ENCODE measurements at regions of chr18 and their contacts with region 1.

Region 1: GRCh38 chr18:63848159-63848558 is 39.3 kb upstream of the SERPINB2 start:
- DNase-seq: peak; percentile 52
- H3K4me3 ChIP-seq: no peak overlapping the region
- H3K27ac ChIP-seq: no peak overlapping the region
- H3K4me1 ChIP-seq: peaks cover 10% of the 10 kb centered on the region
- H3K27me3 ChIP-seq: no peaks in the 10 kb centered on the region
- CTCF ChIP-seq: peak; percentile 71 to 74

Region 2: GRCh38 chr18:63025251-63026090 is 822.7 kb before region 1 on chr18:
- CTCF ChIA-PET with region 1: no interaction called
- dilution Hi-C with region 1: no loop called
- in situ Hi-C with region 1: no loop called
- intact Hi-C with region 1: loop called (anchors 2 kb)
- DNase-seq: peak; percentile 3
- H3K4me3 ChIP-seq: no peak overlapping the region
- H3K27ac ChIP-seq: no peak overlapping the region
- H3K4me1 ChIP-seq: no peaks in the 10 kb centered on the region
- H3K27me3 ChIP-seq: no peaks in the 10 kb centered on the region
- CTCF ChIP-seq: peak; percentile 45 to 50

Region 3: DNA sequence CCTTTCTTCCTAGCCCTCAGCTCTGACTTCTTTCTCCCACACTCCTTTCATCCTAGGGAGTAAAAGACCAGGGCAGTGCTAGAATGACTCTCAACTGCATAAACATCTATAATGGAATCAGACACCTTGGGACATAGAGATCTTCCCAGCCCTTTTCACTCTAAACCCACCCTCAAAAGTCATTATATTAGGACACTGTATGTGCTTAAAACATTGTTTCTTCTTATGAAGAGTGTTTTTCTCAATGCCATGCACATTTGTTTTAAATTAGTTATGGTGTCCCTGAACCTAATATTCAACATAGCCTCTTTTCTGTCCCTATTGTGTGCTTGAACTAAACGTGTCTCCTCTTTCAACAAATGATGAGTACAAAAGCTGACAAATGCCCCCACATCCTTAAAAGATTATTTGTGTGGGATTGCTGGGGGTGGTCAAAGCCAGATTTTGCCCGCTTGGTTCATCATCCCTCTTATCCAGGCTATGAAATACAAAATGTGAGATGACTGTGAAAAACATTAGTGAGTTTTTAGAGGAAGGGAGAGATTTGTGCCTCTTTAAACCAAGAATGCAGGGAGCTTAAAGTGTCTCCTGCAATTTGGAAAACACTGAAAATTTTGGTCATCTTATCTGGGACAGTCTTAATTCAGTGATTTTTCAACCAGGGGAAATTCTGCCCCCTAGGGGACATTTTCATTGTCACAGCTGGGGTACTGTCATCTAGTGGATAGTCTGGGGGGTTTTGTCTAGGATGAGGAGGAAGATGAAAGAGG is 342.4 kb before region 1 on chr18:
- CTCF ChIA-PET with region 1: no interaction called
- dilution Hi-C with region 1: loop called (anchors 25 kb)
- in situ Hi-C with region 1: loop called in 1 of 2 experiments (anchors 5 kb)
- intact Hi-C with region 1: no loop called
- DNase-seq: peak; percentile 72
- H3K4me3 ChIP-seq: no peak overlapping the region
- H3K27ac ChIP-seq: no peak overlapping the region
- H3K4me1 ChIP-seq: no peaks in the 10 kb centered on the region
- H3K27me3 ChIP-seq: no peaks in the 10 kb centered on the region
- CTCF ChIP-seq: peak; percentile 60 to 79

Region 4: DNA sequence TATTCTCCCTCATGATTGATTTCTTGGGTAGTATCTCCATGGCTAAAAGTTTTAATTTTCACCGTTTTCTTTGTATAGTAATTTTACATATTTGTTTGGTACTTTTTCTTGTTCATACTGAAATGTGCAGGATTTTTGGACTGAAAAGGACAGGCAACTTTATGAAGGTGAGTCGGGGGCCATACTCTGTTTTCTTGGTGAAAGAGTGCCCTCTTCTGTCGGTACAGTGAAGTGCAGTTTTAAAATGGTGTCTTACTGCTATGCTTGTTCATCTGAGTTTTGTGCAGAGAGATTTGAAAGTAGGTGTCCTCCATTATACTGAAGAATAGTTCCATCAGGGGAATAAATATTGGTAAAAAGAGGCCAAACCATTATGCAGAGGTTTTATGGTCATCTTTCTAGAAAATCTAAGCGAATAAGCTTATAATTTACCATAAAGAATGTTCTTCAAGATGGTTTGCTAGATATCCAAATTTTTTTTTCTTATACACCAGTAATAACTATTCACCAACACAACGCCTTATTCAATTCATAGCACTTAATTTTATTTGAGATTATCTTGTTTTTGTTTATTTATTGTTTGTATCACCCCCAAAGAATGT is 269.7 kb before region 1 on chr18:
- CTCF ChIA-PET with region 1: no interaction called
- dilution Hi-C with region 1: no loop called
- in situ Hi-C with region 1: no loop called
- intact Hi-C with region 1: loop called (anchors 1 kb)
- DNase-seq: no peak
- H3K4me3 ChIP-seq: no peak overlapping the region
- H3K27ac ChIP-seq: no peak overlapping the region
- H3K4me1 ChIP-seq: no peaks in the 10 kb centered on the region
- H3K27me3 ChIP-seq: no peaks in the 10 kb centered on the region
- CTCF ChIP-seq: peak; percentile 77 to 83

Region 5: GRCh38 chr18:63741769-63742168 is 106.4 kb before region 1 on chr18:
- CTCF ChIA-PET with region 1: no interaction called
- dilution Hi-C with region 1: no loop called
- in situ Hi-C with region 1: loop called in 1 of 2 experiments (anchors 5 kb)
- intact Hi-C with region 1: loop called (anchors 1 kb)
- DNase-seq: peak; percentile 40
- H3K4me3 ChIP-seq: no peak overlapping the region
- H3K27ac ChIP-seq: no peak overlapping the region
- H3K4me1 ChIP-seq: peaks cover 11% of the 10 kb centered on the region
- H3K27me3 ChIP-seq: no peaks in the 10 kb centered on the region
- CTCF ChIP-seq: peak; percentile 77 to 80

Region 6: GRCh38 chr18:63817441-63818051 is 30.6 kb before region 1 on chr18:
- CTCF ChIA-PET with region 1: no interaction called
- dilution Hi-C with region 1: no loop called
- in situ Hi-C with region 1: no loop called
- intact Hi-C with region 1: no loop called
- DNase-seq: no peak
- H3K4me3 ChIP-seq: no peak overlapping the region
- H3K27ac ChIP-seq: no peak overlapping the region
- H3K4me1 ChIP-seq: peaks cover 8% of the 10 kb centered on the region
- H3K27me3 ChIP-seq: no peaks in the 10 kb centered on the region
- CTCF ChIP-seq: no peak

Region 7: DNA sequence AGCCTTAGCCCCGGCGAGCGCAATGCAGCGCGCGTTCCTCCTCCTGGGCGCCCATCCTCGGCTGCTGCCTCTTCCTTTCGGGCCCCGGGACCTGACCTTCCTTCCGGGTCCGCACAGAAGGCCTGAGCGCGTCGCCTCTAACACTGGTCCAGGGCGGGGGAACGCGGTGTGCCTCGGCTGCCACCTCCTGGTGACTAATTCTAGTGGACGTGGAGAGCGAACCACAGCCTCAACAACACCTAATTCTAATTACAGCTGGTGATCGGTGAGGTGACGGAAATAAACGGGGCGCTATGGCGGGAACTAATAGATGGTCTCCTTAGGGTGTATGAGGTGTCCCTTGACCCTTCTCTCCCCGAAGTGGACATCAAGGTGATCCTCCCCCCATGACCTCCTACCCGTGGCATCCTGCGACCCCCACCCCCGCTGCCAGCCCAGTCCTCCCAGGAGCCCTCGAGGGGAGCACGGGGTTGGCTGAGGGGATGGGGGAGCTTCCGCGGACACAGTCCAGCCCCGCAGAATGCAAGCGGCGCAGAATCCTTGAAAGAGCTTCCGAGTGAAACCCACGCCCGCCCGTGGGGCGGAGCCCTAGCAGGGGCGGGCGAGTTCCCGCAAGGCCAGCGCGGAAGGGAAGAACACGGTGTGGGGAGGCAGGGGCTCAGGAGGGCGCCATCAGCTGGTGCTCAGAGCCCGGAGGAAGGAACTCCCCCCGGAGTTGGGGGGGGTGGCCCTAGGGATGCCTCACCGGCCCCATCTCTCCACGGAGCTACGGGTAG is 88.2 kb after region 1 on chr18:
- CTCF ChIA-PET with region 1: no interaction called
- dilution Hi-C with region 1: no loop called
- in situ Hi-C with region 1: loop called (anchors 10 kb)
- intact Hi-C with region 1: loop called (anchors 1 kb)
- DNase-seq: peak; percentile 70
- H3K4me3 ChIP-seq: peak overlapping the region; percentile 60 to 81 (median 62)
- H3K27ac ChIP-seq: no peak overlapping the region
- H3K4me1 ChIP-seq: peaks cover 12% of the 10 kb centered on the region
- H3K27me3 ChIP-seq: no peaks in the 10 kb centered on the region
- CTCF ChIP-seq: peak; percentile 67 to 88

Region 8: DNA sequence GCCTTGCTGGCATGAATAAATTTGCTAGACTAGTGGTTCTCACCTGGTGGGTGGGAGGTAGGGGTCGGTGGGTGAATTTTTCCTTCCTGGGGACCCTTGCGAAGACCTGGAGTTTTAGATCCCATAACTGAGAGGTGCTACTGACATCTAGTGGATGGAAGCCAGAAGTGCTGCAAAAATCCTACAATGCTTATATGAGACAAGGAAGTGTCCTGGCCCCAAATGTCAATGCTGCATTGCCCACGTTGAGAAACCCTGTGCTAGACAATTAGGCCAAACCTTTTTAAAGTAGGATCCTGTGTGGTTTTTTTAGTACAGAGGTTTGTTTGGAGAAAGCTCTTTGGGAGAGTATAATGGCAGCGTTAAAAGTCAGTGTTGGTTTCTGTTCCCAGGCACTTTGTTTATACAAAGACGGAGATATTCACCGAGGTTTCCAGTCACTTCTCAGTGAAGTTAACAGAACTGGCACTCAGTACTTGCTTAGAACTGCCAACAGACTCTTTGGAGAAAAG is 131.3 kb after region 1 on chr18:
- CTCF ChIA-PET with region 1: no interaction called
- dilution Hi-C with region 1: no loop called
- in situ Hi-C with region 1: no loop called
- intact Hi-C with region 1: loop called (anchors 1 kb)
- DNase-seq: peak; percentile 24
- H3K4me3 ChIP-seq: no peak overlapping the region
- H3K27ac ChIP-seq: no peak overlapping the region
- H3K4me1 ChIP-seq: peaks cover 8% of the 10 kb centered on the region
- H3K27me3 ChIP-seq: no peaks in the 10 kb centered on the region
- CTCF ChIP-seq: peak; percentile 93 to 96